ENCODE measurements at regions of chr21 and their contacts with region 1.

Region 1: DNA sequence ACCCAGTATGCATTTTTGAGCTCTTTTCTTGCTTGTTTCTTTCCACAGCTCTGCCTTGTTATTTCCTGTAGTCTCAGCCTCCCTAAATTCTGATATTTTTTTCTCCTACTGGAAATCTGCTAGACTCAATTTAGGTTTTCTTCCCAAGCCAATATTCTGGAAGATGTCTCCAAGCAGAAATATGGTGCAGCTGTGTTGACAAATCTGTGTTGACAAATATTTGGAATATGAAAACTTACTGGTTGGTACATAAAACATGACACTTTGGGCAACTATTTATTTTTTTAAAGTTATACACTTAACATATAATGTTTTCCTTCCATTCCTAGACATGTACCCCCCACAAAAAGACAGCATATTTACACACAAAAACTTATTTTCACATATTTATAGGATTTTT is 1048.4 kb downstream of the NCAM2 start:
- DNase-seq: no peak
- H3K4me3 ChIP-seq: no peak overlapping the region
- H3K27ac ChIP-seq: no peak overlapping the region
- H3K4me1 ChIP-seq: no peaks in the 10 kb centered on the region
- H3K27me3 ChIP-seq: no peaks in the 10 kb centered on the region
- CTCF ChIP-seq: no peak
- POLR2A ChIP-seq: no peak

Region 2: GRCh38 chr21:21029164-21029563 is 1017.4 kb before region 1 on chr21:
- intact Hi-C with region 1: no loop called
- DNase-seq: no peak
- H3K4me3 ChIP-seq: no peak overlapping the region
- H3K27ac ChIP-seq: no peak overlapping the region
- H3K4me1 ChIP-seq: no peaks in the 10 kb centered on the region
- H3K27me3 ChIP-seq: no peaks in the 10 kb centered on the region
- CTCF ChIP-seq: no peak
- POLR2A ChIP-seq: no peak

Region 3: DNA sequence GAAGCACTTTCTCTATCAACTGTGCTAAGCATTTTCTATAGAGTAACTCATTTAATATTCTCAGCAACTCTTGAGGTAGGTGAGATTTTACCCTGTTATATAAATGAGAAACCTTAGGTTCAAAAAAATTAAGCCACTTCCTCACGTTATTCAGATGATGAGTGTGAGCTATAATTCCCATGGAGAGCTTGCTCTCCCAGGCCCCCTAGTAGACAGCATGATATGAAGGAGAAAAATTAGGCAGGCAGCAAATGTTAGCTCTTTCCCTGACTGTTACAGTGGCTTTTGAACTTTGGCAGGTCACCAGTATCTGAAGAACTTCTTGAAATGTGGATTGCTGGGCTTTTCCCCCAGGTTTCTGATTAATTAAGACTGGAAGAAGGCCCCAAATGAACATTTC is 295.3 kb before region 1 on chr21:
- intact Hi-C with region 1: loop called (anchors 5 kb)
- DNase-seq: no peak
- H3K4me3 ChIP-seq: no peak overlapping the region
- H3K27ac ChIP-seq: no peak overlapping the region
- H3K4me1 ChIP-seq: no peaks in the 10 kb centered on the region
- H3K27me3 ChIP-seq: no peaks in the 10 kb centered on the region
- CTCF ChIP-seq: peak in 1 of 3 donors; percentile 20
- POLR2A ChIP-seq: no peak

Measured in breast epithelium (tissue), 4 donors.